Right cardiac atrium (tissue), 5 donors: ENCODE measurements at regions of chr6 and their contacts with region 1.

Region 1: GRCh38 chr6:100001915-100002388 is 7.9 kb upstream of the MCHR2 start:
- DNase-seq: peak; percentile 23 to 52 (median 46)
- ATAC-seq: peak; percentile 45 to 66
- H3K4me3 ChIP-seq: no peak overlapping the region
- H3K27ac ChIP-seq: no peak overlapping the region
- H3K4me1 ChIP-seq: no peaks in the 10 kb centered on the region
- H3K27me3 ChIP-seq: no peaks in the 10 kb centered on the region

Region 2: DNA sequence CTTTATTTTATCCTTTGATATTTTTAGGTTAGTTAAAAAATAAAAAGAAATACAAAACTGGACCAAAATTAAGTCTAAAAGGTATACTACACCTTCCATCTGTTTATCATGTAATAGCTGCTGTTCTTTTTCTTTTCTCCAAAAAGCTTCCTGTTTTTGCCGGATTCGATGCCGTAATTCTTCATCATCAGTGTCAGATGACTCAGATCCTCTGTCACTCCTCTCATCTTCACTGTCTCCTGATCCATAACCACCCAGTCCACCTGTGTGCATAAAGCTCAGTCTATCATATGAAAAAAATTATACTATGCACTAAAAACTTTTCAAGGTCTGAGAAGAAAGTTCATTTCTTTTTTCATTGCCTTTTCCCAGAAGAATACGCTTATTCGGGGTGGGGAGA is 599.5 kb before region 1 on chr6:
- intact Hi-C with region 1: no loop called
- DNase-seq: no peak
- ATAC-seq: no peak
- H3K4me3 ChIP-seq: no peak overlapping the region
- H3K27ac ChIP-seq: no peak overlapping the region
- H3K4me1 ChIP-seq: no peaks in the 10 kb centered on the region
- H3K27me3 ChIP-seq: no peaks in the 10 kb centered on the region

Region 3: DNA sequence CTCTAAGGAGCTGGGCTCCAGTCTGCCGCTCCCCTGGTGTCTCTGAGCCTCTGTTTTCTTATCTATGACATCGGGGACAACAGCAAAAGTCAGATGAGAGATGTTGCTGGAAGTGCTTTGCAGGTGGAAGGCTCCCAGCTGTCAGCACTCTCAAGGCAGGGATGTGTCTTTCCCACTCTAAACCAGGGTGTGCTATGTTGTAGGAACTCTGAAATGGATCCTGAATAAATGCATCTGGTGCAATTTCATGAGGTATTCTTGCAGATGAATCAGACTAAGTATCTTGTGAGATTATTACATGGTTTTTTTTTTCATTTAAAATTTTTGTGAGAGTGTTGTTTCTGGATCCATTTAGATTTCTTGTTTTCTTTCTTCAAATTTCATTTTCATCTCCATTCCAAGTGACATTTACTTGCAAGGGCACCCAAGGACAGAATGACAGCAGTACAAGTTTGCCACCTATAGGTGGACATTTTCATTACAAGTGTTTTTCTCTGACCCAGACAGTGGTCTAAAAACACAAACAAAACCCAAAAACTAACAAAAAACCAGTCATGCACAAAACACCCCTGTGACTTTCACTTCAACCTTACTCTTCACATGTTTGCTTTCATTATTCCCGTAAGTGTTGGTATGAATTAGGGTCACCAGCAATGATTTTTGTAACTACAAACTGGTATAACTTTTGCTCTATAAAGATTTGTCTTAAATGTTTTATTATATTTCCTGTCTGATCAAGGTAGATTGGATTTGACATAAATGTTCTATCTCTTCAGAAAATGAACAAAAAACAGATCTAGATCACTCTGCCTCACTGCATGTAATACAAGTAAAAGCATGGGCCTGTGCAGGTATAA is 477.5 kb after region 1 on chr6:
- intact Hi-C with region 1: loop called in 1 of 4 experiments (anchors 5 kb)
- DNase-seq: no peak
- ATAC-seq: peak in 1 of 2 donors; percentile 55
- H3K4me3 ChIP-seq: no peak overlapping the region
- H3K27ac ChIP-seq: no peak overlapping the region
- H3K4me1 ChIP-seq: no peaks in the 10 kb centered on the region
- H3K27me3 ChIP-seq: no peaks in the 10 kb centered on the region